Gastrocnemius medialis (tissue), 4 donors: ENCODE measurements at regions of chr18 and their contacts with region 1.

Region 1: GRCh38 chr18:3012964-3013804 is at the start of gene LPIN2:
- DNase-seq: peak; percentile 87 to 97
- ATAC-seq: peak; percentile 89 to 93
- H3K4me3 ChIP-seq: peak within 1 kb of the TSS; percentile 62 to 80 (median 70)
- H3K27ac ChIP-seq: peak within 1 kb of the TSS; percentile 60 to 94 (median 78)
- H3K4me1 ChIP-seq: peaks cover 0 to 6% of the 10 kb centered on the region in 2 donors
- H3K27me3 ChIP-seq: no peaks in the 10 kb centered on the region
- CTCF ChIP-seq: peak in 1 of 5 experiments; percentile 9
- POLR2A ChIP-seq: peak; percentile 69 to 81
- total RNA-seq, gene LPIN2: 4.9 to 9.1 (median 8.2) TPM

Region 2: DNA sequence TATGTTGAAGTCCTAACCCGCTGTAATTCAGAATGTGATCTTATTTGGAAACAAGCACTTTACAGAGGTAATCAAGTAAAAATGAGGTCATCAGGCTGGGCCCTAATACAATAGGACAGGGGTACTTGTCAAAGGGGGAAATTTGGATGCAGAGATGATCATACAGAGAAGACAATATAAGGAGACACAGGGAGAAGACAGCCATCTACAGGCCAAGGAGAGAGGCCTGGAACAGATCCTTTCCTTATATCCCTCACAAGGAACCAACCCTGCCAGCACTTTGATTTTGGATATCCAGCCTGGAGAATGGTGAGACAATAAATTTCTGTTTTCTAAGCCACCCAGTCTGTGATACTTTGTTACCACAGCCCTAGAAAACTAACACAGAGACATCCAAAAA is 546.2 kb before region 1 on chr18:
- in situ Hi-C with region 1: no loop called
- intact Hi-C with region 1: no loop called
- DNase-seq: no peak
- ATAC-seq: no peak
- H3K4me3 ChIP-seq: no peak overlapping the region
- H3K27ac ChIP-seq: no peak overlapping the region
- H3K4me1 ChIP-seq: no peaks in the 10 kb centered on the region
- H3K27me3 ChIP-seq: no peaks in the 10 kb centered on the region
- CTCF ChIP-seq: no peak
- POLR2A ChIP-seq: no peak

Region 3: GRCh38 chr18:2958819-2959298 is 54.3 kb before region 1 on chr18:
- in situ Hi-C with region 1: loop called in 1 of 4 experiments (anchors 10 kb)
- intact Hi-C with region 1: no loop called
- DNase-seq: peak; percentile 13 to 43
- ATAC-seq: peak; percentile 62 to 68
- H3K4me3 ChIP-seq: no peak overlapping the region
- H3K27ac ChIP-seq: peak overlapping the region; percentile 58 to 70 (median 64)
- H3K4me1 ChIP-seq: peaks cover 31 to 38% of the 10 kb centered on the region in 2 donors
- H3K27me3 ChIP-seq: no peaks in the 10 kb centered on the region
- CTCF ChIP-seq: no peak
- POLR2A ChIP-seq: no peak

Region 4: GRCh38 chr18:3062798-3063680 is 49.9 kb after region 1 on chr18:
- in situ Hi-C with region 1: no loop called
- intact Hi-C with region 1: loop called (anchors 2 kb)
- DNase-seq: peak; percentile 36 to 54
- ATAC-seq: peak; percentile 69 to 72
- H3K4me3 ChIP-seq: no peak overlapping the region
- H3K27ac ChIP-seq: peak overlapping the region in 1 of 4 donors; percentile 71
- H3K4me1 ChIP-seq: peaks cover 3 to 5% of the 10 kb centered on the region in 2 donors
- H3K27me3 ChIP-seq: no peaks in the 10 kb centered on the region
- CTCF ChIP-seq: peak; percentile 54 to 84 (median 63)
- POLR2A ChIP-seq: no peak

Region 5: GRCh38 chr18:3104190-3105054 is 91.2 kb after region 1 on chr18:
- in situ Hi-C with region 1: loop called in 1 of 4 experiments (anchors 25 kb)
- intact Hi-C with region 1: no loop called
- DNase-seq: no peak
- ATAC-seq: no peak
- H3K4me3 ChIP-seq: no peak overlapping the region
- H3K27ac ChIP-seq: peak overlapping the region in 3 of 4 donors; percentile 10 to 44 (median 32)
- H3K4me1 ChIP-seq: no peaks in the 10 kb centered on the region
- H3K27me3 ChIP-seq: no peaks in the 10 kb centered on the region
- CTCF ChIP-seq: no peak
- POLR2A ChIP-seq: no peak

Region 6: GRCh38 chr18:3261371-3262246 is 248.4 kb after region 1 on chr18 and contains the start of gene MYL12B:
- in situ Hi-C with region 1: no loop called
- intact Hi-C with region 1: loop called (anchors 5 kb)
- DNase-seq: peak; percentile 61 to 73
- ATAC-seq: peak; percentile 79 to 89
- H3K4me3 ChIP-seq: peak within 1 kb of the TSS; percentile 73 to 98 (median 82)
- H3K27ac ChIP-seq: peak within 1 kb of the TSS; percentile 99
- H3K4me1 ChIP-seq: peaks cover 69 to 83% of the 10 kb centered on the region in 2 donors
- H3K27me3 ChIP-seq: no peaks in the 10 kb centered on the region
- CTCF ChIP-seq: peak in 4 of 5 experiments; percentile 12 to 36 (median 24)
- POLR2A ChIP-seq: peak; percentile 68 to 76
- total RNA-seq, gene MYL12B: 100 to 293 (median 185) TPM

Region 7: DNA sequence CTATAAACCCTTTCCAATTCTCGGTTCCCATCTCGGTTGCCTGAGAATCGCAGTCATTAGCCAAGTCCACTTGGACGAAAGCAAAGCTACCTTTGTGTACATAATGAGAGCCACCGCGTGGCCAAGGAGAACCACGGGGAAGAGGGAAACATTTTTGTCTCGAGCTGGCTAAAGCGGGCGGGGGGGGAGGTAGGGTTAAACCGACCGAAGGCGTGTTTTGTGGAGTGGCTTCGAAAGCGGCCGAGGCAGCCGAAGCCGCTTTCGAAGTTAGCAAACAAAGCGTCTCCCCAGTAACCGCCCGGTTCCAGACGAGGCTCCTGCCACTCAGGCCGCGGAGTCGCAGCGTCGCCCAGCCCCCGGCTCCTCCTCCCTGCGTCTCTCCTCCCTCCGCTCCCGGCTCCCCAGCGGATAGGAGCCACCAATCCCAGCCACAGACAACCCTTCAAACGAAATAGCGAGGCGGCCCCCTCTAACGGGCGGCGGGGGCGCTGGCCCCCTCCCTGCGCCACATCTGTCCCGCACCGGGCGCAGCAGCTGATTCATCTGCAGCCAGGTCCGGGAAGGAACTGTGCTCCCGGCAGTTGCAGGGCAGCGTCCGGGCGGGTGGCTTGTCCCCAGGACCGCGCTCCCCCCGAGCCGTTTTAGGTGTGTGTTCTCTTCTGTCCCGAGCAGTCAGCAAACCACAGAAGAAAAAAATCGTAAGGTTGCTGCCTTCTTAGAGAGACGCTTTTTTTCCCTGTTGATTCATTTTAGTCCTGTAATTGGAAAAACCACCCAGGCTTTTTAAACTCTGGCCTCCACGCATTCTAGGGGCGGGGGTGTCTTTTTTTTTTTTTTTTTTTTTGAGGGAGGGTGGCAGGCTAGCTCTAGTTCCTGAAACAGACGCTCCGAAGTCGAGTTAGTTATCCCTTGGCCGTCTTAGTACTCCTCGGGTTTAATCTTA is 435.0 kb after region 1 on chr18:
- in situ Hi-C with region 1: no loop called
- intact Hi-C with region 1: loop called (anchors 1 kb)
- DNase-seq: peak; percentile 94 to 95
- ATAC-seq: peak; percentile 55 to 57
- H3K4me3 ChIP-seq: peak overlapping the region; percentile 71 to 97 (median 82)
- H3K27ac ChIP-seq: peak overlapping the region; percentile 98 to 99 (median 99)
- H3K4me1 ChIP-seq: peaks cover 8 to 13% of the 10 kb centered on the region in 2 donors
- H3K27me3 ChIP-seq: no peaks in the 10 kb centered on the region
- CTCF ChIP-seq: peak in 1 of 5 experiments; percentile 7
- POLR2A ChIP-seq: peak; percentile 97 to 98